ENCODE measurements at regions of chr19 and their contacts with region 1.

Region 1: GRCh38 chr19:56080669-56081401 is 40.3 kb downstream of the ZNF787 start:
- DNase-seq: peak in 1 of 2 donors; percentile 47
- ATAC-seq: peak; percentile 43 to 72
- H3K4me3 ChIP-seq: peak overlapping the region; percentile 30 to 45 (median 40)
- H3K27ac ChIP-seq: no peak overlapping the region
- H3K4me1 ChIP-seq: peaks cover 0 to 7% of the 10 kb centered on the region in 2 donors
- H3K27me3 ChIP-seq: no peaks in the 10 kb centered on the region
- CTCF ChIP-seq: peak; percentile 18 to 58 (median 41)
- POLR2A ChIP-seq: no peak

Region 2: GRCh38 chr19:56162258-56162657 is 81.4 kb after region 1 on chr19:
- in situ Hi-C with region 1: loop called (anchors 5 to 10 kb)
- intact Hi-C with region 1: no loop called
- DNase-seq: no peak
- ATAC-seq: no peak
- H3K4me3 ChIP-seq: no peak overlapping the region
- H3K27ac ChIP-seq: no peak overlapping the region
- H3K4me1 ChIP-seq: no peaks in the 10 kb centered on the region
- H3K27me3 ChIP-seq: no peaks in the 10 kb centered on the region
- CTCF ChIP-seq: no peak
- POLR2A ChIP-seq: no peak

Region 3: DNA sequence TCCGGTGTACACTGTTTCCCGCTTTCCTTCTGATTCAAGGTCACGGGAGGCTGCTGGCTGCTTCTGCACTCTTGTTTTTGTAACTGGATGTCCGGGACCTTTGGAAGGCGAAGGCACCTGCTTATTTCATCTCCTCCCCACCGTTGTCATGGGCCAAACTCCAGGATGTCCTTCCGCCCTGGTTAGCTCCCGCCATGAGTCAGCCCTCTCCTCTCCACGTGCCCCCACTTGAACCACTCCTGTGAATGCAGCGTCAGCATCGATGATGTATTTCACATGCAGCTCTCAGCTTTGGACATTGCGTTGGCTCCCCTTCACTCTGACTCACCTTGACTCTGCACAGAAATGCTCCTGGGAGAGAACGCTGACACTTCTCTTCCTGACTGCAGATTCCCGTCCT is 89.4 kb after region 1 on chr19:
- in situ Hi-C with region 1: loop called (anchors 5 to 10 kb)
- intact Hi-C with region 1: loop called (anchors 1 kb)
- DNase-seq: no peak
- ATAC-seq: peak in 1 of 2 donors; percentile 36
- H3K4me3 ChIP-seq: no peak overlapping the region
- H3K27ac ChIP-seq: no peak overlapping the region
- H3K4me1 ChIP-seq: no peaks in the 10 kb centered on the region
- H3K27me3 ChIP-seq: peaks cover 0 to 8% (median 3%) of the 10 kb centered on the region in 3 donors
- CTCF ChIP-seq: no peak
- POLR2A ChIP-seq: no peak

Region 4: GRCh38 chr19:56252699-56253422 is 172.0 kb after region 1 on chr19:
- in situ Hi-C with region 1: no loop called
- intact Hi-C with region 1: no loop called
- DNase-seq: peak in 1 of 2 donors; percentile 28
- ATAC-seq: no peak
- H3K4me3 ChIP-seq: no peak overlapping the region
- H3K27ac ChIP-seq: no peak overlapping the region
- H3K4me1 ChIP-seq: no peaks in the 10 kb centered on the region
- H3K27me3 ChIP-seq: no peaks in the 10 kb centered on the region
- CTCF ChIP-seq: peak in 4 of 5 experiments; percentile 35 to 67 (median 56)
- POLR2A ChIP-seq: no peak

Region 5: DNA sequence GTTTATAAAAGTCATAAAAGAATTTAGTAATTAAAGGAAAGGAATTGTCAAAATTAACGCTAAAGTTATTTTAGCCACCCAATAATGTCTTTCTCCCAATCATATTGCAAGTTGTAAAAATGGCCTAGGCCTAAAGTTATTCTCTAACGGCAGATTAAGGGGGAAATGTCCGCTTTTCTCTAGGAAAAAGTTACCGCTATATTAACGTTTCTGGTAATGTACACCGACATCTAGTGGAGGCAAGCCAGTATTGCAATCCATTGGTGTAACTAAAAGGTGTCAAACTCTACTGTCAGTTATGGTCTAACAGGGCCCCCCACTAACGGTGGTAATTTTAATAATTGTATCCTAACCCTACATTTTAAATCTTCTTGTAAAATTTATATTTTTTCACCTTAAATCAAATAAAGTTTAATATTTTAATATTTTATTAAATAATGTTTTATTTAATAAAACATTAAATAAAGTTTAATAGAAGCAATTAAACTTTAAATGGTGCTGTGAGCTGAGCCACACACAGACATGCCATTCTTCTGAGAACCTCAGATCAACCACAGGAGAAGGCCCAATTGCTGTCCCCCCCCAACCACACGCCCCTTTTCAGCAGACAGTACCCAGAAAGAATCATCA is 269.7 kb after region 1 on chr19:
- in situ Hi-C with region 1: loop called in 3 of 4 experiments (anchors 10 kb)
- intact Hi-C with region 1: loop called (anchors 1 kb)
- DNase-seq: peak in 1 of 2 donors; percentile 4
- ATAC-seq: no peak
- H3K4me3 ChIP-seq: peak overlapping the region in 1 of 4 donors; percentile 18
- H3K27ac ChIP-seq: no peak overlapping the region
- H3K4me1 ChIP-seq: no peaks in the 10 kb centered on the region
- H3K27me3 ChIP-seq: no peaks in the 10 kb centered on the region
- CTCF ChIP-seq: peak; percentile 59 to 86 (median 77)
- POLR2A ChIP-seq: no peak

Measured in gastrocnemius medialis (tissue), 4 donors.